Activated CD4-positive, alpha-beta T cell treated with anti-CD3 and anti-CD28 coated beads for 36 hours (primary cell): ENCODE measurements at regions of chr10 and their contacts with region 1.

Region 1: GRCh38 chr10:21238717-21239116 is 286.8 kb downstream of the SKIDA1 start:
- DNase-seq: no peak
- ATAC-seq: no peak
- H3K4me3 Mint-ChIP-seq: no peak overlapping the region
- H3K27ac Mint-ChIP-seq: no peak overlapping the region
- H3K4me1 Mint-ChIP-seq: no peaks in the 10 kb centered on the region
- H3K27me3 Mint-ChIP-seq: peaks cover 2% of the 10 kb centered on the region

Region 2: DNA sequence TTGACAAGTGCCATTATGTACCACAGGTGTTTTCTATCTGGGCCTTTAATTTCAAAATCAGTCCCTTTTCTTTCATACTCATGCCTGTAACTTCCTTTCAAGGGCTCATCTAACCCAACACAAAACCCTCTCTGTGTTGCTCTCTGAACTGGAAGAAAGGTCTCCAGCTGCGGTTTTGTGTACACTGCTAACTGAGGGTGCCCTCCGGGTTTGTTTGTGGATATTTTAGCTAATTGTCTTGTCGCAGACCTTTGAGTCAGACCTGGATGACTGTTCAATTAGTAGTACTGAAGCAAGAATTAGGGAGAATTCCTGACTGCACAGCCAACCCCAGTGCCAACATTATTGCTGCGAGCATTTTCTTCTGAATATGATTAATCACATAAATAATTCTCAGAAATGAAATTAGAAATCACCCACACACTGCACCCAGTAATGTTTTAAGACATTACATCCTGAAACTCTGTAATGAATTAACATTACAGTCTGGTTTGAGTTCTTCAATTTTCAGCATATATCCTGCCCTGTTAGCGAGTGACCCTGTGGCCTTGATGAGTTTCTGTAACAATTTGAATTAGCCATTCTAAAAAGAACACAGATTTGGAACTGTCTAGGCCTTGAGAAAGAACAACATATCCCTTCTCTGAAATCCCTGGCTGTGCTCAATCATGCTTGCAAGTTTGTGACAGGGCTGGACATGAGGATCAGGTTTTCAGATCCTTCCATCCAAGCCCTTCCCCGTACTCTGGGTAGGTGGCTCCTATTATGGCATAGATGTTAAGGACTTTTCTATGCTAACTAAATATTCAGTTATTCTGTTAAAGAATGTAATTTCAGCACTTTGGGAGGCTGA is 962.4 kb before region 1 on chr10:
- CTCF ChIA-PET with region 1: no interaction called
- POLR2A ChIA-PET with region 1: no interaction called
- intact Hi-C with region 1: no loop called
- DNase-seq: no peak
- ATAC-seq: no peak
- H3K4me3 Mint-ChIP-seq: no peak overlapping the region
- H3K27ac Mint-ChIP-seq: no peak overlapping the region
- H3K4me1 Mint-ChIP-seq: no peaks in the 10 kb centered on the region
- H3K27me3 Mint-ChIP-seq: no peaks in the 10 kb centered on the region

Region 3: DNA sequence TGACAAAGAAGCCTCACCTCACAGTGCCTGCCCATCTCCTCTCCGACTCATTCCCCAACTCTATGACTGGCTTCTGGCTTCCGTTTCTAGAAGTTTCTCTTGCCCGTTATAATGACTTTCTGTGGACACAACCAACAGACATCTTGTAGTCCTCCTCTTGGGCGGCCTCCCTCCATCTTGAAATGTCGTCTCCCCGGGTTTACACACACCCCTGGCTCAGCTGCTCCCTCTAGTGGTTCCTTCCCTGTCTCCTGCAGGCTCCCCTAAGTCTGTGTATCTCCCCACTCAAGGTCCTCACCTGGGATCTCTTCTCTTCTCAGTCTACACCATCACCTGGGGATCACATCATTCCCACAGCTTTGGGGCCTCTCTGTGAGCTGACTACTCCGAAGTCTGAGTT is 218.2 kb before region 1 on chr10:
- CTCF ChIA-PET with region 1: no interaction called
- POLR2A ChIA-PET with region 1: no interaction called
- intact Hi-C with region 1: no loop called
- DNase-seq: peak; percentile 69
- ATAC-seq: no peak
- H3K4me3 Mint-ChIP-seq: no peak overlapping the region
- H3K27ac Mint-ChIP-seq: no peak overlapping the region
- H3K4me1 Mint-ChIP-seq: no peaks in the 10 kb centered on the region
- H3K27me3 Mint-ChIP-seq: peaks cover 2% of the 10 kb centered on the region

Region 4: DNA sequence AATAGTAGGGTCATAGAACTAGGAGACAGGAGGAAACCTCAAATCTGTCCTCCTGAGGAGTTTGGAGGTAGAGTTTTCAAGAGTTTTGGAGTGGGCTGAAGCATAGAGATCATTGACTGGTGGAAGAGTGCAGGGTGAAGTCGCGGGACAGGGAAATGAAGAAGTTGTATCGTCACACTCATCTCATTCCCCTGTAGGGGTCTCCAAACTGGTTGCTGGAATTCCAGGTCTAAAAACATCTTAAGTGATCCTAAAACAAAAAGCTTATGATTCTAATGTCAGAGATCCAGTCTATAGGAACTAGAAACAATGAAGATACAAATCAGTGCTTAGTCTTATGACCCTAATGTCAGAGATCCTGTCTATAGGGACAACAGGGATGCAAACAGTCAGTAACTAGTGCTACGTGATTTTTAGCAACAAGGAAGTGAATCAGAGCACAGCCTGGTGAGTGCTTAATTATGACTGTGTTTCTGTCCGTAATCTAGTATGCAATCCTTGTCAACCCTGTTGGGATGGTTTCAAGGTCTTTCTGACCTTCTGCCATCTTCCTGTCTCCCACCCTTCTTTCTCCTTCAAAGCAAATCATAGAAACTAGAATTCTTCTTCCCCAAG is 147.4 kb after region 1 on chr10:
- CTCF ChIA-PET with region 1: no interaction called
- POLR2A ChIA-PET with region 1: no interaction called
- intact Hi-C with region 1: no loop called
- DNase-seq: no peak
- ATAC-seq: no peak
- H3K4me3 Mint-ChIP-seq: no peak overlapping the region
- H3K27ac Mint-ChIP-seq: no peak overlapping the region
- H3K4me1 Mint-ChIP-seq: no peaks in the 10 kb centered on the region
- H3K27me3 Mint-ChIP-seq: peaks cover 6% of the 10 kb centered on the region

Region 5: DNA sequence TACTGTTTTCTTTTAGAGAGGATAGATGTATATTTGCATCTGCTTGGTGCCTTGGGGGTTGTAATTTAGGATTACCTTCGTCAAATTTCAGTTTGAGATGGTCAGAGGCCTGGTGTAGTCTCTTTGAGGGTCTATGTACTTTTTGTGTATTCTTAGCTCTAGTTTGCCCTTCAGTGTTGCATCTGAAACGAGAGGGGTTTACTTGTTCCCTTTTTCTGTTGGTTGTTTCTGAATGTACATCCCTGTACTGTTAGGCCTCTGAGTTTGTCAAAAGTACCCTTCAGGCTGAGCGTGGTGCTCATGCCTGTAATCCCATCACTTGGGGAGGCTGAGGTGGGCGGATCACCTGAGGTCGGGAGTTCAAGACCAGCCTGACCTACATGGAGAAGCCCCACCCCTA is 355.3 kb after region 1 on chr10:
- CTCF ChIA-PET with region 1: no interaction called
- POLR2A ChIA-PET with region 1: interaction called, 11 read pairs
- intact Hi-C with region 1: no loop called
- DNase-seq: no peak
- ATAC-seq: no peak
- H3K4me3 Mint-ChIP-seq: no peak overlapping the region
- H3K27ac Mint-ChIP-seq: no peak overlapping the region
- H3K4me1 Mint-ChIP-seq: peaks cover 32% of the 10 kb centered on the region
- H3K27me3 Mint-ChIP-seq: no peaks in the 10 kb centered on the region